Right ventricle myocardium superior (tissue), 1 donor: ENCODE measurements at regions of chrX and their contacts with region 1.

Region 1: DNA sequence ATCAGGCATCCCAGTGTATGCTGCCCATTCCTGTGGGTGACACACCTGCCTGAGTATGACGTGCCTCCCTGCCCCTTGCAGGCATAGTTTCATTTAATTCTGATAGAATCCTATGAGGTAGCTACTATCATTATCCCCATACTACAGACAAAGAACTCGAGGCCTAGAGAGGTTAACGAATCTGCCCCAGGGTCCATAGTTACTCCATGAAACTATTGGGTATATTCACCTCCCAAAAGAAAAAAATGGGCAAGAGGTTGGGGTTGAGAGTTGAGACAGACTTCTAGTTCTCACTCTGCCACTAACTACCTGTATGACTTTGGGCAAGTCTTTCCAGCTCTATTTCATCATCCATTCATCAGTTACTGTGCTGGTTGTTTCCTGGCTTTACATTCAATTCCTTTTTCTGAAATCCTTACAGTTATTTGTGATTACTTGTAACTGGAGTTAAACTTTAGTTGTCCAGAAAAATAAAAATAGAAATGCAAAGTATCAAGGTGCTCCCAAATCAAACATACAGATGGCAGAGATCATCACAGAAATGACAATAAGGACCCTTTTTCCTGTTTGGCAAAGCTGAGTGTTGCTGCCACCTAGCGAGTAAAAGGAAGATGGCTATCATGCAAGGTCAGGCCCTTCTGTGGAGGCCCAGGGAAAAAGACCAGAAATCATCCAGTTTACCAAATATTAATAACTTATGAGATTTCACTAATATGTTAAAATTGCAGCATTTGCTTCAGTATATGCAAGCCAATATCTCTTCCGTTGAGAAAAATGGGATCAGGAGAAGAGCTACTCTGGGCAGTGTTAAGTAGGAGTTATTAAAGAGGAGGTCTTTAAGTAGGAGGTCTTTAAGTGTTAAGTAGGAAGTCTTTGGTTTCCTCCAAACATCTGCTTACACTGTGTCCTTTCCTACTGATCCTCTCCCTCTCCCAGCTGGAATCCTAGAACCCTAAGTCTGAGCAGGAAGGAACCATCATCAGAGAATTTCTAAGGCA is 17.1 kb upstream of the MAP7D3 start:
- DNase-seq: no peak
- ATAC-seq: peak; percentile 73

Region 2: DNA sequence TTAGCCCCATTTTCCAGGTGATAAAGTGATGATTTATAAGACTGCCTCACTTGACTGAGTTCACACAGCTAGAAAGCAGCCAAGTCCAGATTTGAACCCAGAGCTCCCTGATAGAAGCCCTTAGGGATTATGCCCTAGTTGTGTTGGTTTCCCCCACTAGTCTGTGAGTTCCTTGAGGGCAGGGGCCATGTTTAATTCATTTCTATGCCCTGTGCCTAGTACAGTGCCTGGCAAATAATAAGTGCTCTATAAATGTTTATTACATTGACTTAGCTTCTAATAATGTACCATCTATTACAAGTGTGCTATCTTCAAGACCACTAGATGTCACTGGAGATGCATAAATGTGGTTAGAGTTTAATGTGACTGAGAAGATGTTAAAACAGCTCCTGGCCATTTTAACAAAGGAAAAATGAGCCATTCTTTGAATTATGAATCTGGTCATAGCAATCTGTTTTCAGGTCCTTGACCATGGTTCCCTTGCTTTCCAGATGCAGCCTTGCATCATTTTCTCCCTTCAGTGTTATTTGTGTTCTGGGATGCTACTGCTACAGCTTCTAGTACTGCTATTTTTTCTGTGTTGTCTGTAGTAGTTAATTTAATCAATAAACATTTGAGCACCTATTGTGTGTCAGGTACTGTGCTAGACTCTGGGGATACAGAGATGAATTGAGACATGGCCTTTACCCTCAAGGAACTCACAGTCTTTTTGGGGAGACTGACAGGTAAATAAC is 239.9 kb before region 1 on chrX:
- intact Hi-C with region 1: loop called (anchors 5 kb)
- DNase-seq: no peak
- ATAC-seq: peak; percentile 56

Region 3: GRCh38 chrX:136477026-136477425 is 208.7 kb after region 1 on chrX:
- intact Hi-C with region 1: no loop called
- DNase-seq: no peak
- ATAC-seq: no peak